Panc1 (cell line): ENCODE measurements at regions of chr1 and their contacts with region 1.

Region 1: DNA sequence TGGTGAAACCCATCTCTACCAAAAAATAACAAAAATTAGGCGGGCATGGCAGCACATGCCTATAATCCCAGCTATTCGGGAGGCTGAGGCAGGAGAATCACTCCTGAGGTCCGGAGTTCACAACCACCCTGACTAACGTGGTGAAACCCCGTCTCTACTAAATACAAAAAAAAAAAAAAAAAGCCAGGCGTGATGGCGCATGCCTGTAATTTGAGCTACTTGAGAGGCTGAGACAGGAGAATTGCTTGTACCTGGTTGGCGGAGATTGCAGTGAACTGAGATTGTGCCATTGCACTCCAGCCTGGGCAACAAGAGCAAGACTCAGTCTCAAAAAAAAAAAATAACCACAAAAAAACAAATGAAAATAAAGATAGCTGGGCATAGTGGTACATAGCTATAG is 42.3 kb downstream of the CC2D1B start:
- DNase-seq: no peak
- ATAC-seq: no peak
- H3K4me3 ChIP-seq: no peak overlapping the region
- H3K27ac ChIP-seq: no peak overlapping the region
- H3K4me1 ChIP-seq: no peaks in the 10 kb centered on the region
- H3K27me3 ChIP-seq: no peaks in the 10 kb centered on the region
- CTCF ChIP-seq: no peak

Region 2: DNA sequence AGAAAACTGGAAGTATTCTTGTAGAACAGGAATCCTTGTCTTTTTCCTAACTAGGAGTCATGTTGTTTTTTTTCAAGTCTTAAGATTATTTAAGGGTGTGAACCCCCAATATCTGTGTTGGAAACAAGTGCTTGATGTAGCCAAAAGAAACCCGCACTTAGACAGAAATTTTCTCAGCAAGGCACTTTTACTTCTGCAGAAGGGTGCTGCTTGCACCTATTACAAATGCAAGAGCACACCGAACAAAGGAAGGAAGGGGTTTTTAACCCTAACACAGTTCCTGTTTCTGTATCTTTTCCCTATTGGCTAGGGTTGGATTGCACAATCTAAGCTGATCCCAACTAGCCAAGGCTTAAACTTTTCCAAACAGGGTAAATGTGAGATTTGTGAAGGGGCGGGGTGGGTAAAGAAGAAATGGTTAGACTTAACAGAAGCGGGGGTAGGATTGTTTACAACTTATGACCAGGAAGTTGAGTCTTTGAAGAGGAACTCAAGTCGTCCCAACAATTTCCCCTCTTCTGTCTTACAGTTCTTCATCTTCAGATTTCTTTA is 106.7 kb before region 1 on chr1:
- CTCF ChIA-PET with region 1: interaction called, 10 read pairs
- POLR2A ChIA-PET with region 1: no interaction called
- in situ Hi-C with region 1: no loop called
- intact Hi-C with region 1: no loop called
- DNase-seq: no peak
- ATAC-seq: no peak
- H3K4me3 ChIP-seq: no peak overlapping the region
- H3K27ac ChIP-seq: no peak overlapping the region
- H3K4me1 ChIP-seq: no peaks in the 10 kb centered on the region
- H3K27me3 ChIP-seq: no peaks in the 10 kb centered on the region
- CTCF ChIP-seq: no peak

Region 3: DNA sequence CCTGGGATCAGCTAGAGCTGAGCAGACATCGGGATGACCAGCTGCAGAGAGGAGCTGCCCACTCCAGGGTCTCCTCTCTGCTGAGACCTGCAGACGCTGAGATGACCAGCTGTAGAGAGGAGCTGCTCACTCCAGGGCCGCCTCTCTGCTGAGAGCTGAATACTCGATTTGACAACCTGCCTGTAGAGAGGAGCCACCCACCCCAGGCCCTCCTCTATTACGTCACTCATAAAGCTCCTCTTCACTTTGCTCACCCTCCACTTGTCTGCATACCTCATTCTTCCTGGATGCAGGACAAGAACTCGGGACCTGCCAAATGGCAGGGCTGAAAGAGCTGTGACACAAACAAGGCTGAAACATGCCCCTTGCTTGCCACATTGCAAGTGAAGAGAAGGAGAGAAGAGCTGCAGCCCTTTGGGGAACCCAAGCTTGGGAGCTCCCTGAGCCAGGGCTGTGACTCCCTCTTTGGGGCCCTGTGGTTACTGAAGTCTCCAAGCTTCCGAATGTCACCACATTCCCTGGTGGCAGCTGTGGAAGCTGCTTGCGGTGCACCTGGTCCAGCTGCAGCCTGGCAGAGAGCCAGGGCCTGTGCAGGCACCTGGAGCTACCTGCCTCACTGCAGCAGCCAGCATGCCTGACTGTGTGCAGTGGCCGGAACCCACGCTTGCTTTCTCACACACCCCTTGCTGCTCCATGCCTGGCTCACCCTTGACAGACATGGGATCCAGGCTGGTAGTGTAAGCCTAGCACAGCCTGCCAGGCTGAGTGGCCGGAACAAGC is 17.3 kb before region 1 on chr1:
- CTCF ChIA-PET with region 1: no interaction called
- POLR2A ChIA-PET with region 1: no interaction called
- in situ Hi-C with region 1: no loop called
- intact Hi-C with region 1: no loop called
- DNase-seq: no peak
- ATAC-seq: peak; percentile 70; the same call in 1 of the 2 replicates
- H3K4me3 ChIP-seq: no peak overlapping the region
- H3K27ac ChIP-seq: no peak overlapping the region
- H3K4me1 ChIP-seq: no peaks in the 10 kb centered on the region
- H3K27me3 ChIP-seq: no peaks in the 10 kb centered on the region
- CTCF ChIP-seq: no peak

Region 4: GRCh38 chr1:52393174-52393573 is 69.4 kb after region 1 on chr1:
- CTCF ChIA-PET with region 1: no interaction called
- POLR2A ChIA-PET with region 1: no interaction called
- in situ Hi-C with region 1: no loop called
- intact Hi-C with region 1: no loop called
- DNase-seq: no peak
- ATAC-seq: no peak
- H3K4me3 ChIP-seq: no peak overlapping the region
- H3K27ac ChIP-seq: no peak overlapping the region
- H3K4me1 ChIP-seq: no peaks in the 10 kb centered on the region
- H3K27me3 ChIP-seq: no peaks in the 10 kb centered on the region
- CTCF ChIP-seq: no peak

Region 5: DNA sequence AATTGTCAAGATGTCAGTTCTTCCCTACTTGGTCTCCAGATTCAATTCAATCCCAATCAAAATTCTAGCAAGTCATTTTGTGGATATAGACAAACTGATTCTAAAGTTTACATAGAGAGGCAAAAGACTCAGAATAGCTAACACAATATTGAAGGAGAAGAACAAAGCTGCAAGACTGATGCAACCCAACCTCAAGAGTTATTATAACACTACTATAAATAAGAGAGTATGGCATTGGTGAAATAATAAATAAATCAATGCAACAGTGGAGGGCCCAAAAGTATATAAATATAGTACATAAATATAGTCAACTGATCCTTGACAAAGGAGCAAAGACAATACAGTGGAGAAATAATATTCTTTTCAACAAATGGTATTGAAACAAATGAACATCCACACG is 130.4 kb after region 1 on chr1:
- CTCF ChIA-PET with region 1: no interaction called
- POLR2A ChIA-PET with region 1: no interaction called
- in situ Hi-C with region 1: no loop called
- intact Hi-C with region 1: no loop called
- DNase-seq: no peak
- ATAC-seq: no peak
- H3K4me3 ChIP-seq: no peak overlapping the region
- H3K27ac ChIP-seq: no peak overlapping the region
- H3K4me1 ChIP-seq: no peaks in the 10 kb centered on the region
- H3K27me3 ChIP-seq: no peaks in the 10 kb centered on the region
- CTCF ChIP-seq: no peak

Region 6: GRCh38 chr1:53860967-53861411 is 1537.3 kb after region 1 on chr1:
- CTCF ChIA-PET with region 1: no interaction called
- POLR2A ChIA-PET with region 1: no interaction called
- in situ Hi-C with region 1: no loop called
- intact Hi-C with region 1: no loop called
- DNase-seq: no peak
- ATAC-seq: peak; percentile 93
- H3K4me3 ChIP-seq: no peak overlapping the region
- H3K27ac ChIP-seq: no peak overlapping the region
- H3K4me1 ChIP-seq: no peaks in the 10 kb centered on the region
- H3K27me3 ChIP-seq: no peaks in the 10 kb centered on the region
- CTCF ChIP-seq: peak; percentile 91